ENCODE measurements at regions of chr4 and their contacts with region 1.

Region 1: GRCh38 chr4:145618932-145619638 is at the start of gene MMAA:
- DNase-seq: peak; percentile 97 to 99 (median 98)
- ATAC-seq: peak; percentile 100
- H3K4me3 ChIP-seq: peak within 1 kb of the TSS; percentile 69
- H3K27ac ChIP-seq: peak within 1 kb of the TSS; percentile 97
- H3K4me1 ChIP-seq: no peaks in the 10 kb centered on the region
- H3K27me3 ChIP-seq: no peaks in the 10 kb centered on the region
- total RNA-seq, gene MMAA: 7.9 to 10.6 (median 8.3) TPM

Region 2: GRCh38 chr4:145154573-145154972 is 464.5 kb before region 1 on chr4:
- intact Hi-C with region 1: loop called in 1 of 4 experiments (anchors 10 kb)
- DNase-seq: no peak
- ATAC-seq: peak; percentile 76 to 80
- H3K4me3 ChIP-seq: no peak overlapping the region
- H3K27ac ChIP-seq: no peak overlapping the region
- H3K4me1 ChIP-seq: peaks cover 2% of the 10 kb centered on the region
- H3K27me3 ChIP-seq: no peaks in the 10 kb centered on the region

Region 3: DNA sequence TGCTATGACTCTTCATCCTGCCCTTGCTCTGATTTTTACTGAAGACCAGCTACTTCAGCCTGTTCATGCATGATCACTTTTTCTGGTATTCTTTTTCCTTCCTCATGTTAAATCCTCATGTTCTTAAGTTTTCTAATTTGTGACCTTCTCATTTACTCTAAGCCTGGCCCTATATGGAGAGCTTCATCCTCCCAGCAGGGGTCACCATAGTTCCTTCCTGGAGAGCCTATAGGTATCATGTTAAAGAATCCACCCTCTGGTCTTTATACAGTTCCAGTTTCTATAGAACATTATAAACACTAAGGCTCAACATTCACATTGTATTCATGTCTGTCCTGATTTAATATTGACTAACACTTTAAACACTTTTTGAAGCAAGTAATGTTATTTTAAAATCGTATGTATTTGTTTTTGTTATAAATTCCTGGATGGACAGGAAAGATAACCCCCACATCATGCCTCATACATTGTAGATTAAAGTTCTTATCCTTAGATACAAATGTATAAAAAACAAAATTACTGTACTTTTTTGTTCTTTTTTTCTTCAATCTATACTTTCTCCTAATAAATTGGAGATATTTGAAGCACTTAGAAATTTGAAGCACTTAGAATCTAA is 384.9 kb before region 1 on chr4:
- intact Hi-C with region 1: loop called in 2 of 4 experiments (anchors 5 to 10 kb)
- DNase-seq: no peak
- ATAC-seq: peak; percentile 67 to 70
- H3K4me3 ChIP-seq: no peak overlapping the region
- H3K27ac ChIP-seq: no peak overlapping the region
- H3K4me1 ChIP-seq: no peaks in the 10 kb centered on the region
- H3K27me3 ChIP-seq: no peaks in the 10 kb centered on the region

Region 4: DNA sequence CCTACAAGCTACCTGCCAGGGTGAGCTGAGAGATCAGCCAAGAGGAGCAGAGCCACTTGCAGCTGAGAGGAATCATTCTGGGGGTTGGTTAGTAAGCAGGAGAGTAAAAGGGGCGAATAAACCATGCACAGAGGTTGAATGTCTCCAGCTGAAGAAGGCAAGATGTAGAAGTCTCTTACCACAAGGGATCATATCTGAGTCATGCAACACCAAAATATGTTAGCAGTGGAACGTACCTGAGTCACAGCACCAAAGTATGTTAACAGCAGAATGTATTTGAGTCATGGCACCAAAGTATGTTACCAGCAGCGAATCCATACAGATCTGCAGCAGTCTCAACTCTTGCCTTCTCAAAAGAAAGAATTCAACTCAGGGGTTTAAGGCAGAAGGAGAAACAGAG is 90.8 kb after region 1 on chr4:
- intact Hi-C with region 1: no loop called
- DNase-seq: no peak
- ATAC-seq: no peak
- H3K4me3 ChIP-seq: no peak overlapping the region
- H3K27ac ChIP-seq: no peak overlapping the region
- H3K4me1 ChIP-seq: no peaks in the 10 kb centered on the region
- H3K27me3 ChIP-seq: no peaks in the 10 kb centered on the region

Region 5: DNA sequence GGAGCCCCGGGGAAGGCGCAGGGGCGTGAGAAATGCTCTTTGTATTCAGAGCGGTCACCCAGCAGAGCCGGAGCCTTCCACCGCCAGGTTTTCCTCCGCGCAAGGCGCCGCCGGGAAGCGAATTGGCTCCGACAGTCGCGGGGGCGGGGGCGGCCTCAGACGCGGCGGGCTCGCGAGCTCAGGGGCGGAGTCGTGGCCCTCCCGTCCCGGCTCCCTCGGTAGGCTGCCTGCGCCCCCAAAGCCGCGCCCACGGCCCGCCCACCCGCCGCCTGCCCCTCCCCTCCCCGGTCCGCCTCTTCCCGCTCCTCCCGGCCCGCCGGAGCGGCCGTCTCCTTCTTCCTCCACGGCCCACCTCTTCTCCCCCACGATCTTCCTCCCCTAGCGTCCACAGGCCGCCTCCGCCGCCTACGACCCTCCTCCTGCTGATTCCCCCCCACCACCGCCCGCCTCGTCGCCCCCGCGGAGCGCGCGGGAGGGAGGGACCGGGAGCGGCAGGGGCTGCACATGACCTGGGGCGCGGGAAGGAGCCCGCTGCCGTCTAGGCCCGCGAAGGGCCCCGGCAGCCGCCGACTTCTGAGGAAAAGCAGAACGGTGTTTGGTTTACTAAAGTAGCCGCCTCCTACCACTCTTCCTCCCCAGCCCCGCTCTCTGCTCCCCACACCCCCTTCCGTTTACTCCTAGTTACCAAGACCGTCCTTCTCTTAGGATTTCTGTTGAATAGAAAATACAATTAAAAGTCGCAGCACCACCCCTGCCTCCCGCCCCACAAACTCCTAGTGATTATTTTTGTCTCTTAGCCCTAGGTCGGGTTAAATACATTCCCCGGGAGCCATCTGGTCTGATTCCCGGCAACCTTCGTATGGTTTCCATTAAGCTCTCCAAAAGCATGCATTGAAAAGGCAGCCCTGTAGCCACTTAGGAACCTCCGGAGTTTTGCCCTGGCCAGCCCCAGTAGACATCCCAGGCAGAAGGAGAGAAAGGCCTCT is 114.1 kb after region 1 on chr4:
- intact Hi-C with region 1: loop called in 2 of 4 experiments (anchors 5 to 10 kb)
- DNase-seq: peak; percentile 97 to 99 (median 98)
- ATAC-seq: peak; percentile 96 to 98
- H3K4me3 ChIP-seq: peak overlapping the region; percentile 65
- H3K27ac ChIP-seq: peak overlapping the region; percentile 100
- H3K4me1 ChIP-seq: peaks cover 24% of the 10 kb centered on the region
- H3K27me3 ChIP-seq: no peaks in the 10 kb centered on the region

Measured in right cardiac atrium (tissue), 5 donors.